ENCODE measurements at regions of chr18 and their contacts with region 1.

Region 1: GRCh38 chr18:35407871-35408481 is 30.8 kb upstream of the ZNF396 start:
- DNase-seq: peak; percentile 27
- H3K4me3 Mint-ChIP-seq: no peak overlapping the region
- H3K27ac Mint-ChIP-seq: no peak overlapping the region
- H3K4me1 Mint-ChIP-seq: peaks cover 7% of the 10 kb centered on the region
- H3K27me3 Mint-ChIP-seq: peaks cover 5% of the 10 kb centered on the region

Region 2: GRCh38 chr18:35513181-35513936 is 105.4 kb after region 1 on chr18:
- CTCF ChIA-PET with region 1: interaction called, 3 read pairs
- POLR2A ChIA-PET with region 1: no interaction called
- intact Hi-C with region 1: loop called (anchors 5 kb)
- DNase-seq: no peak
- H3K4me3 Mint-ChIP-seq: no peak overlapping the region
- H3K27ac Mint-ChIP-seq: no peak overlapping the region
- H3K4me1 Mint-ChIP-seq: no peaks in the 10 kb centered on the region
- H3K27me3 Mint-ChIP-seq: no peaks in the 10 kb centered on the region

Region 3: GRCh38 chr18:35580701-35581539 is 172.9 kb after region 1 on chr18:
- CTCF ChIA-PET with region 1: interaction called, 3 read pairs
- POLR2A ChIA-PET with region 1: no interaction called
- intact Hi-C with region 1: loop called (anchors 5 kb)
- DNase-seq: peak; percentile 61
- H3K4me3 Mint-ChIP-seq: peak overlapping the region; percentile 68
- H3K27ac Mint-ChIP-seq: peak overlapping the region; percentile 53
- H3K4me1 Mint-ChIP-seq: peaks cover 34% of the 10 kb centered on the region
- H3K27me3 Mint-ChIP-seq: peaks cover 25% of the 10 kb centered on the region

Region 4: GRCh38 chr18:35756506-35757117 is 348.6 kb after region 1 on chr18:
- CTCF ChIA-PET with region 1: no interaction called
- POLR2A ChIA-PET with region 1: no interaction called
- intact Hi-C with region 1: loop called (anchors 5 kb)
- DNase-seq: peak; percentile 54
- H3K4me3 Mint-ChIP-seq: no peak overlapping the region
- H3K27ac Mint-ChIP-seq: no peak overlapping the region
- H3K4me1 Mint-ChIP-seq: no peaks in the 10 kb centered on the region
- H3K27me3 Mint-ChIP-seq: peaks cover 24% of the 10 kb centered on the region

Measured in activated CD4-positive, alpha-beta memory T cell treated with anti-CD3 and anti-CD28 coated beads for 36 hours (primary cell).